CD8-positive, alpha-beta T cell (primary cell): ENCODE measurements at regions of chr6 and their contacts with region 1.

Region 1: DNA sequence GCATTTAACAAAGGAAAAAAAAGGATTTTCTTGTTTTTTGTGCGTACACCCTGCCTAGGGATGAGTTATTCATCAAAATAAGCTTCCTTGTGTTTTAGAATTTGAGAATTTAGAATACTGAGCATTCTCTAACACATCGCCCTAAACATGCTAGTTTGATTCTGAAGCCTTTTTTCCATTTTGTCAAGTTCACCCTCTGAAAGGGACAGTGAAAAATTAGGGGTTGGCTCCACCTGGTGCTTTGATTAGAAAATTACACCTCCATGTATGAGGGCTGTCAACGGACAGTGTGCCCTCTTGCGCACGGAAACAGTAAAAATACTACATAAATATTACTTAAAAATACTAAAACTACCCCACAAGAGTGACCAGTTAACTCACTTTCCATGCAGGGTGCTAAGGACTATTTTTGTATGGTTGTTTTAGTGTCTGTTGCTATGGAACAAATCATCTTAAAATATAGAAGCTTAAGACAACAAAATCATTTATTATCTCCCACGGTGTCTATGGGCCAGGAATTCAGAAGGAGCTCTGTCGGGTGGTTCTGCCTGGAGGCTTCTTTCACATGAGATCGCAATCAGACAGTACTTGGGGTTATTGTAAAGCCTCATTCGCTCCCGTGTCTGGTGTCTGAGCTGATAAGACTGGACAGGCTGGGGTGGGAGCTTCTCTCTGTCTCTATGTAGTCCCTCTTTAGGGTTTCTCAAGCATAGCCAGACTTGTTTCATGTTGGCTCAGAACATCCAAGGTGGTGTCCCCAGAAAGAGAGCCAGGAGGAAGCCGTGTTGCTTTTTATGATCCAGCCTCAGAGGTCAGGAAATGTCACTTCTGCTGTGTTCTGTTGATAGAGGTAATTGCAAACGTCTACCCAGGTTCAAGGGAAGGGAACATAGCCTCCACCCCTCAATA is 41.1 kb upstream of the TMEM170B start:
- DNase-seq: peak; percentile 48 to 87 (median 69)
- ATAC-seq: peak; percentile 99
- H3K4me3 ChIP-seq: no peak overlapping the region
- H3K4me3 Mint-ChIP-seq: no peak overlapping the region
- H3K27ac ChIP-seq: no peak overlapping the region
- H3K27ac Mint-ChIP-seq: no peak overlapping the region
- H3K4me1 ChIP-seq: no peaks in the 10 kb centered on the region
- H3K4me1 Mint-ChIP-seq: peaks cover 3% of the 10 kb centered on the region
- H3K27me3 ChIP-seq: no peaks in the 10 kb centered on the region
- H3K27me3 Mint-ChIP-seq: no peaks in the 10 kb centered on the region
- CTCF ChIP-seq: peak; percentile 98

Region 2: GRCh38 chr6:11093589-11094410 is 402.6 kb before region 1 on chr6 and contains the start of gene SMIM13:
- CTCF ChIA-PET with region 1: interaction called, 11 read pairs
- POLR2A ChIA-PET with region 1: no interaction called
- intact Hi-C with region 1: loop called in 1 of 2 experiments (anchors 2 kb)
- DNase-seq: peak; percentile 87 to 96 (median 95)
- ATAC-seq: peak; percentile 92
- H3K4me3 ChIP-seq: peak within 1 kb of the TSS; percentile 85 to 90
- H3K4me3 Mint-ChIP-seq: peak within 1 kb of the TSS; percentile 97
- H3K27ac ChIP-seq: peak within 1 kb of the TSS; percentile 81 to 92
- H3K27ac Mint-ChIP-seq: peak within 1 kb of the TSS; percentile 97
- H3K4me1 ChIP-seq: peaks cover 13% of the 10 kb centered on the region
- H3K4me1 Mint-ChIP-seq: peaks cover 30% of the 10 kb centered on the region
- H3K27me3 ChIP-seq: no peaks in the 10 kb centered on the region
- H3K27me3 Mint-ChIP-seq: no peaks in the 10 kb centered on the region
- CTCF ChIP-seq: peak; percentile 75
- total RNA-seq, gene SMIM13: 4.7 to 5.4 TPM

Region 3: DNA sequence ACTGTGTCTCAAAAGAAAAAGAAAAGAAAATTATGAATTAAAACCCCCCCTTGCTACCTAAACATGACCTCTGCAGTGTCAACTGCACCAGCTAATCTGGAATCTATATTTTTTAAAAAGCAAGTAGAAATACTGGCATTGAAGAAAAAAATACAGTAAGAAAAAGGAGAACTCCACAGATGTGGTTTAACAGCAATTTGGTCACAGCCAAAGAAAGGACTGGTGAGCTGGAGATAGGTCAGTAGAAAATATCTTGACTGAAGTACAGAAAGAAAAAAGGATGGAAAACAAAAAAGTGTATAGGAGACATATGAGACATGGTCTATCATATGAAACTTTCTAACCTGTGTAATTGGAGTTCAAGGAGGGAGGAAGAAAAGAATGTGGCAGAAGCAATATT is 340.8 kb before region 1 on chr6:
- CTCF ChIA-PET with region 1: interaction called, 11 read pairs
- POLR2A ChIA-PET with region 1: no interaction called
- intact Hi-C with region 1: no loop called
- DNase-seq: no peak
- ATAC-seq: no peak
- H3K4me3 ChIP-seq: no peak overlapping the region
- H3K4me3 Mint-ChIP-seq: no peak overlapping the region
- H3K27ac ChIP-seq: no peak overlapping the region
- H3K27ac Mint-ChIP-seq: no peak overlapping the region
- H3K4me1 ChIP-seq: no peaks in the 10 kb centered on the region
- H3K4me1 Mint-ChIP-seq: peaks cover 7% of the 10 kb centered on the region
- H3K27me3 ChIP-seq: no peaks in the 10 kb centered on the region
- H3K27me3 Mint-ChIP-seq: peaks cover 3% of the 10 kb centered on the region
- CTCF ChIP-seq: no peak

Region 4: DNA sequence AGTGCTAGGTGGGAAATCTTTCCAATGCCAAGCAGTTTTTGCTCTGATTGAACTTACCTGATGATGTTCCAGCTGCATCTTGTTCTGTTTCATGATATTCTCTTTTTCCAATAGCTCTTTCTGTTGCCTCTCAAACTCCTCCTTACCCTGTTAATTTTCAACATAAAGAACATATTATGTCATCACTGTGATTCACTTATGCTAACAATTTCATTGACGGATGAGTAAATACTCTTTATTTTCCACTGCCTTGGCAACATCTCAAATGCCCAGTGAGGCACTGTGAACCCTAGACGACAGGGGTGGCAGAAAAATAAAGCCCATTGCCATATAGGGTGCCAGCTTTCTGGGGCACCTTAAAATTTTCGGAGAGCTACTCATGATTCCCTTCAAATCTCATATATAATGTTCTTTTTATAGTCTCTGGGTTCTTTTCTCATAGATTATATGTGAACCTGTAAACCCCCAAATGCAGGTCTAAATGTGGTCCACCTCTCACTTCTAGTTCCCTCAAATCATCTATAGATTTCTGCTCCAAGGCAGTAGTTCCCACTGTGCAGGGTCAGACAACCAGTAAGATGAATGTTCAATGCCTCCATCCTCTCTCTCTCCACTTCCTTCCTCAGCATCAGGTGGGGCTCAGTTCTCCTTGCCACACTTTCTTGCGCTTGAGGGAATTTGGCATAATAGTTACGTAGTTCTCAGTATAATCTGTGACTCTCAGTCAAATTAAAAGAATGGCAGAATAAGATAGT is 308.1 kb before region 1 on chr6:
- CTCF ChIA-PET with region 1: interaction called, 12 read pairs
- POLR2A ChIA-PET with region 1: no interaction called
- intact Hi-C with region 1: no loop called
- DNase-seq: no peak
- ATAC-seq: no peak
- H3K4me3 ChIP-seq: no peak overlapping the region
- H3K4me3 Mint-ChIP-seq: no peak overlapping the region
- H3K27ac ChIP-seq: no peak overlapping the region
- H3K27ac Mint-ChIP-seq: peak overlapping the region; percentile 29
- H3K4me1 ChIP-seq: no peaks in the 10 kb centered on the region
- H3K4me1 Mint-ChIP-seq: no peaks in the 10 kb centered on the region
- H3K27me3 ChIP-seq: no peaks in the 10 kb centered on the region
- H3K27me3 Mint-ChIP-seq: no peaks in the 10 kb centered on the region
- CTCF ChIP-seq: no peak

Region 5: DNA sequence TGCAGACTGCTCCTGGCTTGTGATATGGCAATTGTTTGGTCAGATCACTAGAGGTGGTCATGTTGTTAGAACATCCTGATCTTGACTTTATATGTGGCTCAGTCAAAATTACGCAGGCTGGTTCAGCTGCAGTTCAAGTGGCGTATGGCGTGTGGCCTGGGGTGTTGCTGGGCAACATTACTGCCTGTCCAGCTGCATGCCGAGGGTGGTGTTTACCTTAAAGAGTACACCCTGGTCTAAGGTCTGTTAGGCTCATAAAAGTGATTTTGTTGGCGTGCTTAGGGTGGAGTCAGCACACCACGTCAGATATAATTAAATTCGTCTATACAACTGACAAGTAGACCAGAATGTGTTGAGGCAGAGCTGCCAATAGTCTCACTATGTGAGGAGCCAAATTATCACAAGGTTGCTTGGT is 208.4 kb before region 1 on chr6:
- CTCF ChIA-PET with region 1: no interaction called
- POLR2A ChIA-PET with region 1: no interaction called
- intact Hi-C with region 1: no loop called
- DNase-seq: no peak
- ATAC-seq: no peak
- H3K4me3 ChIP-seq: no peak overlapping the region
- H3K4me3 Mint-ChIP-seq: no peak overlapping the region
- H3K27ac ChIP-seq: no peak overlapping the region
- H3K27ac Mint-ChIP-seq: no peak overlapping the region
- H3K4me1 ChIP-seq: no peaks in the 10 kb centered on the region
- H3K4me1 Mint-ChIP-seq: peaks cover 15% of the 10 kb centered on the region
- H3K27me3 ChIP-seq: no peaks in the 10 kb centered on the region
- H3K27me3 Mint-ChIP-seq: no peaks in the 10 kb centered on the region
- CTCF ChIP-seq: no peak

Region 6: GRCh38 chr6:11392778-11393507 is 103.5 kb before region 1 on chr6:
- CTCF ChIA-PET with region 1: no interaction called
- POLR2A ChIA-PET with region 1: no interaction called
- intact Hi-C with region 1: no loop called
- DNase-seq: no peak
- ATAC-seq: no peak
- H3K4me3 ChIP-seq: no peak overlapping the region
- H3K4me3 Mint-ChIP-seq: no peak overlapping the region
- H3K27ac ChIP-seq: no peak overlapping the region
- H3K27ac Mint-ChIP-seq: no peak overlapping the region
- H3K4me1 ChIP-seq: no peaks in the 10 kb centered on the region
- H3K4me1 Mint-ChIP-seq: no peaks in the 10 kb centered on the region
- H3K27me3 ChIP-seq: no peaks in the 10 kb centered on the region
- H3K27me3 Mint-ChIP-seq: peaks cover 3% of the 10 kb centered on the region
- CTCF ChIP-seq: no peak

Region 7: DNA sequence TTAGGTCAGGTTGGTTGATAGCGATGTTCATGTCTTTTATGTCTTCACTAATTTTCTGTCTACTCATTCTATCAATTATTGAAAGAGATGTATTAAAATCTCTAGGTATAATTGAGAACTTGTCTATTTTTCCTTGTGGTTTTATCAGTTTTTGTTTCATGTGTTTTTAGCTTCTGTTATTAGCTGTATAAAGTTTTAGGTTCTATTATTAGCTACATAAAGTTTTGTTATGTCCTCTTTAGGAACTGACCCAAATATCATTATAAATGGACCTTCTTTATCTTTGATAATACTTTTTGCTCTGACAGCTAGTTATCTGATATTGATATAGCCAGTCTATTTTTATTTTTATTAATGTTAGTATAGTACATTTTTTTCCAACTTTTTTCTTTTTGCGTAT is 51.3 kb before region 1 on chr6:
- CTCF ChIA-PET with region 1: no interaction called
- POLR2A ChIA-PET with region 1: no interaction called
- intact Hi-C with region 1: no loop called
- DNase-seq: no peak
- ATAC-seq: no peak
- H3K4me3 ChIP-seq: no peak overlapping the region
- H3K4me3 Mint-ChIP-seq: no peak overlapping the region
- H3K27ac ChIP-seq: no peak overlapping the region
- H3K27ac Mint-ChIP-seq: no peak overlapping the region
- H3K4me1 ChIP-seq: no peaks in the 10 kb centered on the region
- H3K4me1 Mint-ChIP-seq: no peaks in the 10 kb centered on the region
- H3K27me3 ChIP-seq: no peaks in the 10 kb centered on the region
- H3K27me3 Mint-ChIP-seq: peaks cover 3% of the 10 kb centered on the region
- CTCF ChIP-seq: no peak

Region 8: DNA sequence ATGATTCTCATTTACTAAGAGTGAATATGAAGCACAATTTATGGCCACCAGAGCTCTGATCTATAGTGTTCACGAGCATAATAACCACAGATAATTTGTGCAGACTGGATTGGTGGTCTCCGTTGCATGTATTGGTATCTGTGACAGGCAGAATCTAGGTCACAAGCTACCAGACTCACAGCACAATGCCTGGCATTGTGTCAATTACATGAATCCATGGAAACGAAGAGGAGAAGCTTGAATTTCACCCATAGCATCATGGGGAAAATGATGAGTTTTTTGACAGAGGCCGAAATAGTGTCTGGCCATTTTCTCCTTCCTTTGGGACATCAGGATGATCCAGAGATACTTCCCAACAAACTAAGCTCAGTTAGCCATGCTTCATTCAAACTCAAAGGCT is 11.1 kb before region 1 on chr6:
- CTCF ChIA-PET with region 1: interaction called, 12 read pairs
- POLR2A ChIA-PET with region 1: no interaction called
- intact Hi-C with region 1: no loop called
- DNase-seq: no peak
- ATAC-seq: no peak
- H3K4me3 ChIP-seq: no peak overlapping the region
- H3K4me3 Mint-ChIP-seq: no peak overlapping the region
- H3K27ac ChIP-seq: no peak overlapping the region
- H3K27ac Mint-ChIP-seq: no peak overlapping the region
- H3K4me1 ChIP-seq: no peaks in the 10 kb centered on the region
- H3K4me1 Mint-ChIP-seq: no peaks in the 10 kb centered on the region
- H3K27me3 ChIP-seq: no peaks in the 10 kb centered on the region
- H3K27me3 Mint-ChIP-seq: no peaks in the 10 kb centered on the region
- CTCF ChIP-seq: no peak

Region 9: GRCh38 chr6:11575408-11576033 is 79.1 kb after region 1 on chr6:
- CTCF ChIA-PET with region 1: interaction called, 14 read pairs
- POLR2A ChIA-PET with region 1: no interaction called
- intact Hi-C with region 1: loop called (anchors 1 kb)
- DNase-seq: peak in 8 of 9 experiments; percentile 5 to 67 (median 42)
- ATAC-seq: peak; percentile 88
- H3K4me3 ChIP-seq: no peak overlapping the region
- H3K4me3 Mint-ChIP-seq: no peak overlapping the region
- H3K27ac ChIP-seq: no peak overlapping the region
- H3K27ac Mint-ChIP-seq: no peak overlapping the region
- H3K4me1 ChIP-seq: no peaks in the 10 kb centered on the region
- H3K4me1 Mint-ChIP-seq: no peaks in the 10 kb centered on the region
- H3K27me3 ChIP-seq: no peaks in the 10 kb centered on the region
- H3K27me3 Mint-ChIP-seq: no peaks in the 10 kb centered on the region
- CTCF ChIP-seq: peak; percentile 85

Region 10: GRCh38 chr6:11770546-11771466 is 274.4 kb after region 1 on chr6:
- CTCF ChIA-PET with region 1: no interaction called
- POLR2A ChIA-PET with region 1: no interaction called
- intact Hi-C with region 1: no loop called
- DNase-seq: peak in 1 of 9 experiments; percentile 35
- ATAC-seq: no peak
- H3K4me3 ChIP-seq: no peak overlapping the region
- H3K4me3 Mint-ChIP-seq: no peak overlapping the region
- H3K27ac ChIP-seq: no peak overlapping the region
- H3K27ac Mint-ChIP-seq: no peak overlapping the region
- H3K4me1 ChIP-seq: no peaks in the 10 kb centered on the region
- H3K4me1 Mint-ChIP-seq: peaks cover 2% of the 10 kb centered on the region
- H3K27me3 ChIP-seq: no peaks in the 10 kb centered on the region
- H3K27me3 Mint-ChIP-seq: no peaks in the 10 kb centered on the region
- CTCF ChIP-seq: no peak